Activated CD4-positive, alpha-beta T cell treated with anti-CD3 and anti-CD28 coated beads for 36 hours (primary cell): ENCODE measurements at regions of chr2 and their contacts with region 1.

Region 1: DNA sequence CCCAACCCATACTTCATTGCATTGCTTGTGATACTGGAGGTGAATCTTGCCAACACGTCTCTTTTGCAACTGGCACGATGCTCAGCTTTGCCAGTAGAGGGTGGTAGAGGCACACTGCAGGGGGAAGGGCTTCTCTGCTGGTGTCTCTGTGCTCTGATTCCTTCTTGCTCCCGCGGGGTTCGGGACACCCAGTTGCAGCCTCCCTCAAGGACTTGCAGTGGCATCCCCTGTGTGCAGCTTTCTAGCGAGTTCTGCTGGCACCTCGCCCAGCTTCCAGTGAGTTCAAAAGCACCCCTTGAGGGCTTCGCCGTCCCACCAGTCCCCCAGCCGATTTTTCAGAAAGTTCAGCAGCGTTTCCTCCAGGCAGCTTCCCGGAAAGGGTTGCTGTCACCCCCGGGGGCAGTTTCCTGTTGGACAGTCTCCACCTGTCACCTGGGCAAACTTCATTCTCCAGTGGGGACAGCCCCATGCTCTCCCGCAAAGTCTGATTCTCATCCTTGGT is 35.3 kb upstream of the EN1 start:
- DNase-seq: peak; percentile 82
- ATAC-seq: peak; percentile 89
- H3K4me3 Mint-ChIP-seq: peak overlapping the region; percentile 71
- H3K27ac Mint-ChIP-seq: peak overlapping the region; percentile 69
- H3K4me1 Mint-ChIP-seq: peaks cover 19% of the 10 kb centered on the region
- H3K27me3 Mint-ChIP-seq: peaks cover 7% of the 10 kb centered on the region

Region 2: DNA sequence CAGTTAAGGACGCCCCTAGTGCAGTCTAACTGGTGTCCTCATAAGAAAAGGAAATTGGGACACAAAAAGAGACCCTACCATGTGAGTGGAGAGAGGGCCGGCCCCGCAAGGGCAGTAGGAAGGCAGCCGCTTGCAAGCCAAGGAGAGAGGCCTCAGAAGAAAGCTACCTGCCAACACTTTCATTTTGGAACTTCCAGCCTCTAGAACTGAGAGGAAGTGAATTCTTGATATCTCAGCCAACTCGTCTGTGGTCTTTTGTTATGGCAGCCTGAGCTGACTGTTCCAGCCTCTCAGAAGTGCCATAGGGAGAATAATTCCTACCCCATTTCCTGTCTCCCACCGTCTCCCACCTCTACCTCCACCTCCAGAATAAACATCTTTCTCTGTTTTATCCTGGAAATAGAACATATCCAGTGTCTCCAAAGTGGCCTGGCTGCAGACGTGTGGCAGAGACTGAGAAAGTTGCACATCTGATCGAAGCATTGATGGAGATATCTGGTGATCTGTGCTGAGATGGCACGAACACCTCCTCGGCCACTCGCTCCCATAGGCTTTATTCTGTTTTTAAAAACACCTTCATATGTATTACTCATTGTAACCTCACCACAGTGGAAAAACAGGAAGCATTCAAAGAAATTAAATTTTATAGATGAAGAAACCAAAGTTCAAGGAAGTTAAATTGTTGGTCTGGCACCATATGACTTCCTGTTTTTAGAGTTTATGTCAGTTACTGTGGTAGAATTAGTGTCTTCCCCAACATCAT is 19.7 kb after region 1 on chr2:
- CTCF ChIA-PET with region 1: interaction called, 24 read pairs
- POLR2A ChIA-PET with region 1: no interaction called
- intact Hi-C with region 1: no loop called
- DNase-seq: no peak
- ATAC-seq: peak; percentile 23
- H3K4me3 Mint-ChIP-seq: no peak overlapping the region
- H3K27ac Mint-ChIP-seq: peak overlapping the region; percentile 53
- H3K4me1 Mint-ChIP-seq: peaks cover 22% of the 10 kb centered on the region
- H3K27me3 Mint-ChIP-seq: no peaks in the 10 kb centered on the region

Region 3: GRCh38 chr2:118968961-118969733 is 86.4 kb after region 1 on chr2:
- CTCF ChIA-PET with region 1: interaction called, 4 read pairs
- POLR2A ChIA-PET with region 1: no interaction called
- intact Hi-C with region 1: loop called in 1 of 2 experiments (anchors 5 kb)
- DNase-seq: no peak
- ATAC-seq: no peak
- H3K4me3 Mint-ChIP-seq: no peak overlapping the region
- H3K27ac Mint-ChIP-seq: no peak overlapping the region
- H3K4me1 Mint-ChIP-seq: no peaks in the 10 kb centered on the region
- H3K27me3 Mint-ChIP-seq: peaks cover 14% of the 10 kb centered on the region

Region 4: DNA sequence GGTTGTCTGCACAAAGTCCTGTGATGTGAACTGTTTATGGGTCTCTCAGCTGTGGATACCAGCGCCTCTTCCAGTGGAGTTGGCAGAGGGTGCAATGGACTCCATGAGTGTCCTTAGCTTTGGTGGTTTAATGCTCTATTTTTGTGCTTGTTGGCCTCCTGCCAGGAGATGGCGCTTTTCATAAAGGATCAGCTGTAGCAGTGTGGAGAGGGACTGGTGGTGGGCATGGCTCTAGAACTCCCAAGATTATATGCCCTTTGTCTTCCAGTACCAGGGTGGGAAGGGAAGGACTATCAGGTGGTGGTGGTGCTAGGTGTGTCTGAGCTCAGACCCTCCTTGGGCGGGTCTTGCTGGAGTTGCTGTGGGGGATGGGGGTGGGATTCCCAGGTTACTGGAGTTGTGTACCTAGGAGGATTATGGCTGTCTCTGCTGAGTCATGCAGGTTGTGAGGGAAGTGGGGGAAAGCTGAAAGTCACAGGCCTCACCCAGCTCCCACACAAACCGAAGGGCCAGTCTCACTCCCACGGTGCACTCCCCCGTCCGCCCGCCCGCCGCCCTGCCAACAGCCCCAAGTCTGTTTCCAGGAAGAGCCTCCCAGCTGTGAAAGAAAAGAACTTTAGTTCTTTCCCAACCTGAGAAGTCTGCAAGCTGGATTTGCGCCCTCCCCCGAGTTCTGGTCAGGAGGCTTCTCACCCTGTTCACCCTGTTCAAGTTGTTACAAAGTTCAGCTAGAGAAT is 167.4 kb after region 1 on chr2:
- CTCF ChIA-PET with region 1: interaction called, 4 read pairs
- POLR2A ChIA-PET with region 1: no interaction called
- intact Hi-C with region 1: loop called in 1 of 2 experiments (anchors 1 kb)
- DNase-seq: peak; percentile 29
- ATAC-seq: no peak
- H3K4me3 Mint-ChIP-seq: no peak overlapping the region
- H3K27ac Mint-ChIP-seq: no peak overlapping the region
- H3K4me1 Mint-ChIP-seq: no peaks in the 10 kb centered on the region
- H3K27me3 Mint-ChIP-seq: peaks cover 20% of the 10 kb centered on the region

Region 5: GRCh38 chr2:119174216-119175037 is 291.7 kb after region 1 on chr2:
- CTCF ChIA-PET with region 1: interaction called, 60 read pairs
- POLR2A ChIA-PET with region 1: no interaction called
- intact Hi-C with region 1: loop called (anchors 1 kb)
- DNase-seq: peak; percentile 77
- ATAC-seq: peak; percentile 57
- H3K4me3 Mint-ChIP-seq: no peak overlapping the region
- H3K27ac Mint-ChIP-seq: no peak overlapping the region
- H3K4me1 Mint-ChIP-seq: no peaks in the 10 kb centered on the region
- H3K27me3 Mint-ChIP-seq: no peaks in the 10 kb centered on the region

Region 6: GRCh38 chr2:119476301-119477021 is 593.7 kb after region 1 on chr2:
- CTCF ChIA-PET with region 1: interaction called, 10 read pairs
- POLR2A ChIA-PET with region 1: no interaction called
- intact Hi-C with region 1: loop called (anchors 1 to 2 kb)
- DNase-seq: peak; percentile 60
- ATAC-seq: peak; percentile 79
- H3K4me3 Mint-ChIP-seq: no peak overlapping the region
- H3K27ac Mint-ChIP-seq: no peak overlapping the region
- H3K4me1 Mint-ChIP-seq: no peaks in the 10 kb centered on the region
- H3K27me3 Mint-ChIP-seq: peaks cover 8% of the 10 kb centered on the region